Sigmoid colon (tissue), 7 donors: ENCODE measurements at regions of chr17 and their contacts with region 1.

Region 1: GRCh38 chr17:81294856-81295680 is at the start of gene SLC38A10:
- DNase-seq: peak; percentile 95
- H3K4me3 ChIP-seq: peak within 1 kb of the TSS; percentile 81 to 98 (median 84)
- H3K27ac ChIP-seq: peak within 1 kb of the TSS; percentile 92 to 95 (median 94)
- H3K4me1 ChIP-seq: peaks cover 0 to 43% (median 38%) of the 10 kb centered on the region in 4 donors
- H3K27me3 ChIP-seq: no peaks in the 10 kb centered on the region
- CTCF ChIP-seq: no peak
- EP300 ChIP-seq: peak in 1 of 4 donors; percentile 30
- POLR2A ChIP-seq: peak; percentile 92 to 97
- total RNA-seq, gene SLC38A10: 32.1 to 54.8 (median 42.3) TPM

Region 2: GRCh38 chr17:81253358-81254131 is 41.5 kb before region 1 on chr17:
- intact Hi-C with region 1: no loop called
- DNase-seq: no peak
- H3K4me3 ChIP-seq: no peak overlapping the region
- H3K27ac ChIP-seq: peak overlapping the region in 1 of 4 donors; percentile 85
- H3K4me1 ChIP-seq: peaks cover 0 to 19% (median 18%) of the 10 kb centered on the region in 4 donors
- H3K27me3 ChIP-seq: no peaks in the 10 kb centered on the region
- CTCF ChIP-seq: peak; percentile 87 to 94 (median 90)
- EP300 ChIP-seq: no peak
- POLR2A ChIP-seq: no peak

Region 3: DNA sequence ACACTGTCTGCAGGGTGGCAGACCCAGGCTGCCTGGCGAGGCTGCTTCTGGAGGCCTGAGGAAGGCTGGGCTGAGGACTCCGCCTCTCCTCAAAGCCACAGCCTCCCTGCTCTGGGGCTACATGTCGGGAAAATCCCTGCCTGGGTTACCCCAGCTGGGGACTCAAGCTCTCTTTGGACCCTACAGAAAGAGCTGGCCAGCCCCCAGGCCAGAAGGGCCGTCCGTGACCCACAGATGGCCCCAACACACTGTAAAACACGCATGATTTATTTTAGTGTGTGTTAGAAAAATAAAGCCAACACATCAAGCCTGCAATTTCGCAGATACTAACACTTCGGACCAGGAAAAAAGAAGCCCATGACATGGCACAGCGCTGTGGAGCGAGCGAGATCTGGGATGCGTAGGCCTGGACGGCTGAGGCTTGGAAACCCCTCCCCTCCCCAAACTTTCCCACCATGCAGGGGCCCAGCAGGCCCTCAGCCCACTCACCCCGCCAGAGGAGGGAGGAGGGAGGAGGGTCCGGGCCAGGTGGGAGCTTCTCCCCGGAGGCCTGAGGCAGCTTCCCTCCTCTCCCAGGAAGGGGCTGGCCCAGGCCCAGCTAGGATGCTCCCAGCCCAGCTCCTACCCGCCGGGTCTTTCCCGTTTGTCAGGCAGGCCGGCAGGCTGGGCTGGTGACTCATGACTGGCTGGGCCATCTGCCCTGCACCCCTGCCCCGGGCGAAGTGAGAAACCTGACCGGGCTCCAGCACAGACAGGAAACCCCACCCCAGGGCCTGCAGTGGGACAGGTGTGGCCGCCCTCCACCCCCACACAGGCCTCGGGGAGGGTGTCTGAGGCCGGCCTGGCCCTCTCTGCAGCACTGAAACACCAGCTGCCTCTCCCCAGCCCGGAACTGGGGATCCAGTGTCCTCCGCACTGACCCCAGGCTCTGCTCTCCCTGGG is 34.2 kb after region 1 on chr17:
- intact Hi-C with region 1: no loop called
- DNase-seq: peak; percentile 97
- H3K4me3 ChIP-seq: no peak overlapping the region
- H3K27ac ChIP-seq: peak overlapping the region; percentile 78 to 89 (median 82)
- H3K4me1 ChIP-seq: peaks cover 0 to 39% (median 33%) of the 10 kb centered on the region in 4 donors
- H3K27me3 ChIP-seq: no peaks in the 10 kb centered on the region
- CTCF ChIP-seq: no peak
- EP300 ChIP-seq: peak in 1 of 4 donors; percentile 6
- POLR2A ChIP-seq: no peak

Region 4: DNA sequence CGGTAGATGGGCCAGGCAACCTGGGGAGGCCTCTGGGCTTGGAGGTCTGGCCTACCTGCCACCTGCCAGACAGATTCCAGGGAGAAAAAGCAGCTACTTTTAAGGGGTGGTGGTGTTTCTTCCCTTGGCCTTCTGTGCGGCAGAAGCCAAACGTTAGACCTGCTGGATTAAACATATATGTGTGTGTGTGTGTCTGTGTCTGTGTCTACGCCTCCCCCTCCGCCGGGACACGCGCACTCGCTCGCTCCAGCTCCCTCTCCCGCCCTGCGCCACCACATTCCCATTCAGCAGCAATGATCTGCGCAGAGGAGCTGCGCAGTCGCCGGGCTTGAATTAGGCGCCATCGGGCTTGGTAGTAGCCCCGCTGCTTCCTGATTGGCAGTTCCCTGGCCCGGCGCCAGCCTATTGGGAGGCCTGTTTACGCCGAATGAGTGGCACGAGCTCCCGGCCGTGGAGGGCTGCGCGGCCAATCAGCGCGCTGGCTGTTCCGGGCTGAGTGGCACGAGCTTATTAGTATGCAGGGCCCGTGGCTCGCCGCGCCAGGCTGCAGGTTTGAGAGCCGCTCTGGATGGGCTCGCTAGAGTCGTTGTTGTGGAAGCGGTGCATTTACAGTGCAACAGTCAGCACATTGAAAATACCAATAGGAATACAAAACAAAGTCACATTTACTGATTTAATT is 100.0 kb after region 1 on chr17 and contains the start of gene BAHCC1:
- intact Hi-C with region 1: loop called (anchors 5 kb)
- DNase-seq: peak; percentile 100
- H3K4me3 ChIP-seq: peak within 1 kb of the TSS; percentile 69 to 84 (median 74)
- H3K27ac ChIP-seq: peak within 1 kb of the TSS; percentile 93 to 99 (median 98)
- H3K4me1 ChIP-seq: peaks cover 0 to 57% (median 38%) of the 10 kb centered on the region in 4 donors
- H3K27me3 ChIP-seq: no peaks in the 10 kb centered on the region
- CTCF ChIP-seq: no peak
- EP300 ChIP-seq: peak in 2 of 4 donors; percentile 23 to 66
- POLR2A ChIP-seq: peak; percentile 96 to 97
- total RNA-seq, gene BAHCC1: 3.8 to 18.6 (median 7.2) TPM

Region 5: GRCh38 chr17:82230627-82231311 is 935.7 kb after region 1 on chr17:
- intact Hi-C with region 1: no loop called
- DNase-seq: peak; percentile 93
- H3K4me3 ChIP-seq: peak overlapping the region; percentile 51 to 81 (median 64)
- H3K27ac ChIP-seq: peak overlapping the region; percentile 87 to 94 (median 90)
- H3K4me1 ChIP-seq: peaks cover 0 to 62% (median 44%) of the 10 kb centered on the region in 4 donors
- H3K27me3 ChIP-seq: peaks cover 5 to 19% (median 16%) of the 10 kb centered on the region in 3 donors
- CTCF ChIP-seq: peak; percentile 59 to 71 (median 66)
- EP300 ChIP-seq: peak in 1 of 4 donors; percentile 52
- POLR2A ChIP-seq: no peak